ENCODE measurements at regions of chr7 and their contacts with region 1.

Region 1: DNA sequence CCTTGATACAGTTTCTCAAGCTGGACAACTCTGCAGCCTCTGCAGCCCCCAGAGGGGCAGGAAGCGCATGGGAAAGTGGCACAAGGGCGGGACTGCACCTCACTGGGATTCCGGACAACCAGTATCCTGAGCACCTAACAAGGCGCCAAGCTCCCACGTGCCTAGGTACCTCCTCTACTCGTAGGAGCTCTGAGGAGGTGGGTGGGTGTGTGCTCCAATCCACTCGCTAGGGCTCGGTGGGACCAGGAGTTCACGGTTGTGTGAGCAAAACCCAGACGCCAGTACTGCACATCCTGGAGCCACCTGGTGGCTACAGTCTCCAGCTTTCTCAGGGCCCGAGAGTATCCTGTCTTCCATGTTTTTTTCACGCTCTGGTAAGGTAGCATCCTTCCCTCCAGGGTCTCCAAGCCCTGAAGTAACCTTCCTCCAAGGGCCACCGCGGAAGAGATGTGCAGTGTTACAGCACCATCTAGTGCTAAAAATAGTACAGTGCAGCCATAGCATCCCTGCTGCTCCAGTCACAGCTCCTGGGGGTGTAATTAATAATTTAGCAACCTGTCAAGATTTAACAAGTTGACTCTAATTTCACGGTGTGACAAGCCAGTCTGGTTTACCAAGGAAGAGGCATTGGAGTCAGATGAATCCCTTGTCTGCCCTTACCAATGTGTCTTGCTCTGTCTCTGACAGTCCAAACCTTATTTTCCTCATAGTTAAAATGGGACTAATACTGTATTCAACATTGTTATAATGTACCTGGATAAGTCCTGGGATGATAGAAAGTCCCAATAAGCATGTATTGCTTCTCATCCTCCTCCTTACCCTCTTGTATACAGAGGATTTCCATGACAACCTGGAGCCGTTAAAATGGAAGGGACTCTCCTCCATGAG is 70.4 kb downstream of the HERPUD2 start:
- DNase-seq: peak; percentile 62 to 67
- H3K4me3 ChIP-seq: no peak overlapping the region
- H3K4me3 Mint-ChIP-seq: no peak overlapping the region
- H3K27ac Mint-ChIP-seq: no peak overlapping the region
- H3K4me1 ChIP-seq: no peaks in the 10 kb centered on the region
- H3K4me1 Mint-ChIP-seq: no peaks in the 10 kb centered on the region
- H3K27me3 ChIP-seq: no peaks in the 10 kb centered on the region
- H3K27me3 Mint-ChIP-seq: peaks cover 3% of the 10 kb centered on the region
- CTCF ChIP-seq: peak; percentile 88 to 90

Region 2: GRCh38 chr7:35185907-35186731 is 438.4 kb before region 1 on chr7:
- CTCF ChIA-PET with region 1: no interaction called
- POLR2A ChIA-PET with region 1: no interaction called
- intact Hi-C with region 1: loop called (anchors 5 kb)
- DNase-seq: no peak
- H3K4me3 ChIP-seq: no peak overlapping the region
- H3K4me3 Mint-ChIP-seq: no peak overlapping the region
- H3K27ac Mint-ChIP-seq: no peak overlapping the region
- H3K4me1 ChIP-seq: no peaks in the 10 kb centered on the region
- H3K4me1 Mint-ChIP-seq: no peaks in the 10 kb centered on the region
- H3K27me3 ChIP-seq: no peaks in the 10 kb centered on the region
- H3K27me3 Mint-ChIP-seq: peaks cover 10% of the 10 kb centered on the region
- CTCF ChIP-seq: no peak

Region 3: DNA sequence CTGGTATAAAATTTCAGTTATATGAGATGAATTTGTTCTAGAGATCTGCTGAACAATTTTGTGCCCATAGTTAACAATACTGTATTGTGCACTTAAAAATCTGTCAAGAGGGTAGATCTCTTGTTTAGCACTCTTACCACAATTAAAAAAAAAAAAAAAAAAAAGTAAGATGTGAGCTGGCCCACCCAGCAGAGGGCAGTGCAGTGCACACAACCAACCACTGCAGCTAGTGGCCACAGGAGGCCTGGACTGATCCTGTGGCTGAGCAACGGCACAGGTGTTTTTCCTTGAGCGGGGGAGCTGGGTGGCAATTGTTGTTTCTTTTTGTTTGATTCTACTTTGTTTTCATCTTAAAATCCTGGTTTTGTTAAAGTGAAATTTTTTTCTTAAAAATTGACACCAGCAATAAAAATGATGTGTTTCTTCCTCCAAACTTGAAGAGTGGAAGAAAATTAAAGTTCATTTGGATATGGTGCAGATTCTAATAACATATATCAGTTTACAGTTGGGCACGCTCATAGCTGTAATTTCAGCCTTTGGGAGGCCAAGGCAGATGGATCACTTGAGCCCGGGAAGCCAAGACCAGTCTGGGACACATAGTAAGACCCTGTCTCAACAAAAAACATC is 199.6 kb before region 1 on chr7:
- CTCF ChIA-PET with region 1: interaction called, 19 read pairs
- POLR2A ChIA-PET with region 1: no interaction called
- intact Hi-C with region 1: loop called (anchors 1 kb)
- DNase-seq: peak; percentile 53 to 71
- H3K4me3 ChIP-seq: no peak overlapping the region
- H3K4me3 Mint-ChIP-seq: no peak overlapping the region
- H3K27ac Mint-ChIP-seq: no peak overlapping the region
- H3K4me1 ChIP-seq: no peaks in the 10 kb centered on the region
- H3K4me1 Mint-ChIP-seq: no peaks in the 10 kb centered on the region
- H3K27me3 ChIP-seq: no peaks in the 10 kb centered on the region
- H3K27me3 Mint-ChIP-seq: peaks cover 12% of the 10 kb centered on the region
- CTCF ChIP-seq: peak; percentile 79 to 87

Region 4: GRCh38 chr7:35519971-35520809 is 104.4 kb before region 1 on chr7:
- CTCF ChIA-PET with region 1: interaction called, 4 read pairs
- POLR2A ChIA-PET with region 1: no interaction called
- intact Hi-C with region 1: loop called (anchors 1 kb)
- DNase-seq: peak; percentile 66 to 77
- H3K4me3 ChIP-seq: no peak overlapping the region
- H3K4me3 Mint-ChIP-seq: no peak overlapping the region
- H3K27ac Mint-ChIP-seq: no peak overlapping the region
- H3K4me1 ChIP-seq: no peaks in the 10 kb centered on the region
- H3K4me1 Mint-ChIP-seq: no peaks in the 10 kb centered on the region
- H3K27me3 ChIP-seq: no peaks in the 10 kb centered on the region
- H3K27me3 Mint-ChIP-seq: peaks cover 22% of the 10 kb centered on the region
- CTCF ChIP-seq: peak; percentile 88 to 91

Region 5: DNA sequence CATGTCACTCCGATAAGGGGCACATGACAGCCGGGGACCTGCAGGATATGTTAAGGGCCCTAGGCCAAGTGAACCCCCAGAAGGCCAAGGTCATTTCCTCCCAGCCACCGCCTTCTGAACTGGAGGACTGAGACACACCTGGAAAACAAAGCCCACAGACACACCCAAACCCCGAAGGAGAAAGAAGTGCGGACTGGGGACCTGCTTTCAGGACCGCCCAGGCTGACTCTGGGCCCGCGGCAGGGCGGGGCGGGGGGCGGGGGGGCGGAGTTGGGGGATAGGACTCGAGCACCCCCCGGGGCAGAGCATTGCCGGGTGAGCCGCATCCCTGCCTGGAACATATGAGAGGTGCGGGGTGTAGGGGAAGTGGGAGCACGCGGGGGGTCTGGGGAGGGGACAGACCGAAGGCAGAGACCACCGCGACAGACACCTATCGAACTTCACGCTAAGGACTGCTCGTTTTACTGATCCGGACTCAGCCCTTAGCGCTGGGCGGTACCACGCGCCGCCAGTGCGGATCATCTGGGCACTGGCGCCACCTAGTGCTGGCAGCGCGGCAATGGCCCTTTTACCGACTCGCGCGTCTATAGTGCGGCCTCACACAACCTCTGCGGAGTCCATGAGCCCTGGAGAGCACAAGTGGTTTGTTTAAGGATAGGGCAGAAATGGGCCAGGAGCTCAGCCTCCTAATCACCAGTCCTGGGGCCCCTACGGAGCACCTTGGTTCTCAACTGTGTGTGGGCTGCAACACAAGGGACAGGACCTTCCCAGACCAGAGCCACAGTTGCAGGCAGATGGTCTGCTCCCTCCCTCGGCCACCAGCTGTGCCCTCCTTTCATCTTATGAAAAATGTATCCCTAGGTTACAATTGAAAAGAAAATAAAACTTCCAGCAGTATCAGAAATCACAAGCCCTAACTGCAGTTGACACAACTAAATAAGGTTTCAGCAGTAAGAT is 87.2 kb before region 1 on chr7:
- CTCF ChIA-PET with region 1: no interaction called
- POLR2A ChIA-PET with region 1: no interaction called
- intact Hi-C with region 1: loop called (anchors 1 kb)
- DNase-seq: peak; percentile 73 to 87
- H3K4me3 ChIP-seq: peak overlapping the region; percentile 39
- H3K4me3 Mint-ChIP-seq: peak overlapping the region; percentile 67
- H3K27ac Mint-ChIP-seq: no peak overlapping the region
- H3K4me1 ChIP-seq: no peaks in the 10 kb centered on the region; the same call in 1 of the 2 replicates
- H3K4me1 Mint-ChIP-seq: no peaks in the 10 kb centered on the region
- H3K27me3 ChIP-seq: 0 out of 2 replicates have a peak, but pooled peaks cover 2% of the 10 kb centered on the region
- H3K27me3 Mint-ChIP-seq: peaks cover 22% of the 10 kb centered on the region
- CTCF ChIP-seq: peak; percentile 93 to 95

Region 6: GRCh38 chr7:35555934-35556333 is 68.6 kb before region 1 on chr7:
- CTCF ChIA-PET with region 1: no interaction called
- POLR2A ChIA-PET with region 1: no interaction called
- intact Hi-C with region 1: no loop called
- DNase-seq: no peak
- H3K4me3 ChIP-seq: no peak overlapping the region
- H3K4me3 Mint-ChIP-seq: no peak overlapping the region
- H3K27ac Mint-ChIP-seq: no peak overlapping the region
- H3K4me1 ChIP-seq: peaks cover 27% of the 10 kb centered on the region
- H3K4me1 Mint-ChIP-seq: peaks cover 14% of the 10 kb centered on the region
- H3K27me3 ChIP-seq: no peaks in the 10 kb centered on the region
- H3K27me3 Mint-ChIP-seq: no peaks in the 10 kb centered on the region
- CTCF ChIP-seq: no peak

Region 7: DNA sequence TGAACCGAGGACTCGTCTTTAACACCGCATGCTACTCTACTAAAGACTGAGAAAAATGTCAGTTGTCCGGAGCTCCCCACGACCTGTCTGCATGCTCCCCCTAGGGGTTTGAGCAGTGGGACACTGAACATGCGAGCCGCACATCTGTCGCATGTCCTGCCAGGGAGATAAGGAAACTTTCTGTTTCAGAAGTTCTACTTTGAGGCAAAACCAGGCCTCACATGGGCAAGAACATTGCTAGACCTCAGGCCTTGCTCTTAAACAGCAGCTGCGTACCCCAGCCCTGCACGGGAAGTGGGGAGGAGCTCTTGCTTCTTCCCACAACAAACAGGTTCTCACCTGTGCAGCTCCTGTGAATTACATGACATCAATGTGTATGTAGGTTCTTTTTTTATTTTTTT is 100.7 kb after region 1 on chr7:
- CTCF ChIA-PET with region 1: no interaction called
- POLR2A ChIA-PET with region 1: no interaction called
- intact Hi-C with region 1: no loop called
- DNase-seq: no peak
- H3K4me3 ChIP-seq: no peak overlapping the region
- H3K4me3 Mint-ChIP-seq: no peak overlapping the region
- H3K27ac Mint-ChIP-seq: no peak overlapping the region
- H3K4me1 ChIP-seq: peaks cover 19% of the 10 kb centered on the region
- H3K4me1 Mint-ChIP-seq: peaks cover 20% of the 10 kb centered on the region
- H3K27me3 ChIP-seq: no peaks in the 10 kb centered on the region
- H3K27me3 Mint-ChIP-seq: no peaks in the 10 kb centered on the region
- CTCF ChIP-seq: no peak

Region 8: DNA sequence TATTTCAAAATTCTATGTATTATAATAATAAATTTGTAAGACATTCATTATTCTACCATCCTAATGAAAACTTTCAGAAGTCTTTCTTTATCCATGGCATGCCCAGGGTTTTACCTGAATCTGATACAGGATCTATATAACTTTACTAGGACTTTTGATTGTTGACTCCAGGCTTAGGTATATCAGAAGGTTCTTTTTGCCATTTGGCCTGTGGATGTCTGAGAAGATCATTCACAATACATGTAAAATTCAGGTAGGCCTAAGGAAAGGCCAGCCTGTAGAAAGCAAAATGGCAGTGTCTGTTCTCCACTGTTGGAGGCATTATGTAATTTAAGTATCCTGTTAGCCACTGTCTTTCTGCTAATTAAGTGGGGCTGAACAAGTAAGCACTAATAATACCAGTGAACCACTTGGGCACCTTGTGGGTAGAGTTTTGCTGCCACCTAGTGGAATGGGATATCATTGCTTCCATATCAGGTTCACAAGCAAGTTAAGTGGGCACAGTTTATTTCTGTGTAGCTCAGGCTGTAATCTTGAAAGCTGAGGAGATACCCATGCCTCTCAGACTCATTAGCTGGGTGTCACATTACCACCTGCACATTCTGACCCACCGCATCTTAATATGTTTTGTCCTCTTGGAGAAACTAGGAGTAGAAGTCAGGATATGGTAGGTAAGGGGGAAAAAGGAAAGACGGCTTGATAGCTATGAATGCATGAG is 281.8 kb after region 1 on chr7:
- CTCF ChIA-PET with region 1: no interaction called
- POLR2A ChIA-PET with region 1: no interaction called
- intact Hi-C with region 1: loop called (anchors 5 kb)
- DNase-seq: peak; percentile 60 to 75
- H3K4me3 ChIP-seq: no peak overlapping the region
- H3K4me3 Mint-ChIP-seq: no peak overlapping the region
- H3K27ac Mint-ChIP-seq: no peak overlapping the region
- H3K4me1 ChIP-seq: no peaks in the 10 kb centered on the region
- H3K4me1 Mint-ChIP-seq: no peaks in the 10 kb centered on the region
- H3K27me3 ChIP-seq: no peaks in the 10 kb centered on the region
- H3K27me3 Mint-ChIP-seq: no peaks in the 10 kb centered on the region
- CTCF ChIP-seq: peak; percentile 74 to 88